ENCODE measurements at regions of chr16 and their contacts with region 1.

Region 1: GRCh38 chr16:15427648-15428239 is 6.6 kb upstream of the BMERB1 start:
- DNase-seq: peak; percentile 79 to 89
- ATAC-seq: peak; percentile 90
- H3K4me3 ChIP-seq: no peak overlapping the region
- H3K27ac ChIP-seq: no peak overlapping the region
- H3K4me1 ChIP-seq: no peaks in the 10 kb centered on the region
- H3K27me3 ChIP-seq: no peaks in the 10 kb centered on the region

Region 2: GRCh38 chr16:15548482-15548891 is 120.7 kb after region 1 on chr16:
- intact Hi-C with region 1: loop called (anchors 2 to 5 kb)
- DNase-seq: no peak
- ATAC-seq: no peak
- H3K4me3 ChIP-seq: no peak overlapping the region
- H3K27ac ChIP-seq: no peak overlapping the region
- H3K4me1 ChIP-seq: peaks cover 3% of the 10 kb centered on the region in 2 donors
- H3K27me3 ChIP-seq: no peaks in the 10 kb centered on the region

Region 3: DNA sequence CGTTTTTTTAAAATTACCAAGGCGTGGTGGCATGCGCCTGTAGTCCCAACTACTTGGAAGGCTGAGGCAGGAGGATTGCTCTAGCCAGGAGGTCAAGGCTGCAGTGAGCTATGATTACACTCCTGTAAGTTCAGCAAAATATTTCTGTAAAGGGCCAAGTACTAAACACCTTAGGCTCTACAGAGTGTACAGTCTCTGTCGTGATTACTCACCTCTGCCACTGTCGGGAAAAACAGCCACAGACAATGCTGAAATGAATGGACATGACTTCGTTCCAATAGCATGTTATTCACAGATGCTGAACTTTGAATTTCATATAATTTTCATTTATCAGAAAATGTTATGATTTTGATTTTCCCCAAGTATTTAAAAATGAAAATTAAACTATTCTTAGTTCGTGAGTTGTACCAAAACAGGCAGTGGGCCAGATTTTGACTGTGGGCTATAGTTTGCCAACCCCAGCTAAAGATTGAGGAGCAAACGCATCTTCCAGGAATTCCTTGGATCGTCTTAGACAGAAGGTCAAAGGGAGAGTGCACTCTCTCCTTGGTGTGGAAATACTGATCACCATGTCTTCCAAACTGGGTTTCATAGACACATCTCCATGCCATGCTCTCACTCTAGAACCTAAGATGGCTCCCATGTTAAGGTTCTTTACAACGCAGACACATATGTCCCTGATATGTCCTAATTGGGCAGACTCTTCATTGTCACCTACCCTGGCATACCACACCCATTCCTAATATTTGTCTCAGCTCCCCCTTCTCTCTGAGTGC is 125.8 kb after region 1 on chr16:
- intact Hi-C with region 1: loop called (anchors 2 to 5 kb)
- DNase-seq: no peak
- ATAC-seq: no peak
- H3K4me3 ChIP-seq: no peak overlapping the region
- H3K27ac ChIP-seq: no peak overlapping the region
- H3K4me1 ChIP-seq: no peaks in the 10 kb centered on the region
- H3K27me3 ChIP-seq: no peaks in the 10 kb centered on the region

Region 4: GRCh38 chr16:16183562-16183961 is 755.8 kb after region 1 on chr16:
- intact Hi-C with region 1: loop called in 1 of 2 experiments (anchors 10 kb)
- DNase-seq: no peak
- ATAC-seq: no peak
- H3K4me3 ChIP-seq: no peak overlapping the region
- H3K27ac ChIP-seq: no peak overlapping the region
- H3K4me1 ChIP-seq: no peaks in the 10 kb centered on the region
- H3K27me3 ChIP-seq: no peaks in the 10 kb centered on the region